ENCODE measurements at regions of chr16 and their contacts with region 1.

Region 1: GRCh38 chr16:3129137-3130131 is 5.4 kb upstream of the ZNF213 start:
- DNase-seq: peak; percentile 73
- H3K4me3 ChIP-seq: peak overlapping the region; percentile 32 to 46 (median 42)
- H3K27ac ChIP-seq: peak overlapping the region; percentile 19
- H3K4me1 ChIP-seq: peaks cover 22% of the 10 kb centered on the region
- H3K27me3 ChIP-seq: no peaks in the 10 kb centered on the region
- CTCF ChIP-seq: peak; percentile 87 to 91

Region 2: DNA sequence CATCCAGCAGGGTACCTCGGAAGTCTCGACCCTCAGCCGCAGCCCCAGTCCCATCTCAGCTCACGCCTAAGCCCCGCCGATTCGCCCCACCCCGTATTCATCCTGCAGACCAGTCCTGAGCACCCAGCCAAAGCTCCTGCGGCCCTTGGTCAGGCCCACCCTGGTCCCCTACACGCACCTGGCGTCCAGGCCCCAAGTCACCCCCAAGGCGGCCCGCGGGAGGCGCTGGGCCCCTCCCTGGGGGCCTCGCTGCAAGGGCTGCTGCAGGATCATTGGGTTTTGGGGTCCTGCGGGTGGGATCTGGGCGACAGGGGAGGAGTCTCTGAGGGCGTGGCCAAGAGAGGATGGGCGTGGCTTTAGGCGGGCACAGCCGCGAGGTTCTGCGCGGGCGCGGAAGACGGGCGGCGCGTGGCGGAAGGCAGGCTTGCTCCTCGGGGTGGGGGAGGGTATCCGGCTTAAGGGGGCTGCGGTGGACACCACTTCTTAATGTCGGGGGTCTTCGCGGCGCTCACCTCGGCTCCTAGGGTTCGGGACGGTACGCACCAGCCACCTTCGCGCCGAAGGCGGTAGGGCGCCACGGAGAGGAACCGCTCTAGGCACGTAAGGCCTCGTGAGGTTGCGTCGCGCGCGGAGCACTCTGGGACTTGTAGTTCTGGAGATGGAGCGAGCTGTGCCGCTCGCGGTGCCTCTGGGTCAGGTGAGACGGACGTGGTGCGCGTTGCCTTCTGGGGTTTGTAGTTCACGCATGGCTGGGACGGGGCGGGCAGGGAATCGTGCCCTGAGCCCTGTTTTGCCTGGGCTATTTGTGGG is 105.6 kb before region 1 on chr16 and contains the starts of genes HCFC1R1 and THOC6:
- CTCF ChIA-PET with region 1: no interaction called
- dilution Hi-C with region 1: loop called (anchors 5 kb)
- in situ Hi-C with region 1: no loop called
- intact Hi-C with region 1: no loop called
- DNase-seq: peak; percentile 98
- H3K4me3 ChIP-seq: peak within 1 kb of the TSS; percentile 60 to 97 (median 90)
- H3K27ac ChIP-seq: peak within 1 kb of the TSS; percentile 97
- H3K4me1 ChIP-seq: peaks cover 26% of the 10 kb centered on the region
- H3K27me3 ChIP-seq: no peaks in the 10 kb centered on the region
- CTCF ChIP-seq: no peak
- total RNA-seq, gene HCFC1R1: 2.2 to 20.4 TPM
- total RNA-seq, gene THOC6: 8.3 to 26.8 TPM

Region 3: GRCh38 chr16:3059000-3059722 is 70.3 kb before region 1 on chr16:
- CTCF ChIA-PET with region 1: interaction called, 5 read pairs
- dilution Hi-C with region 1: no loop called
- in situ Hi-C with region 1: loop called in 1 of 2 experiments (anchors 5 kb)
- intact Hi-C with region 1: loop called (anchors 1 kb)
- DNase-seq: peak; percentile 78
- H3K4me3 ChIP-seq: peak overlapping the region; percentile 74 to 99 (median 82)
- H3K27ac ChIP-seq: peak overlapping the region; percentile 29
- H3K4me1 ChIP-seq: peaks cover 13% of the 10 kb centered on the region
- H3K27me3 ChIP-seq: no peaks in the 10 kb centered on the region
- CTCF ChIP-seq: peak; percentile 48 to 71

Region 4: DNA sequence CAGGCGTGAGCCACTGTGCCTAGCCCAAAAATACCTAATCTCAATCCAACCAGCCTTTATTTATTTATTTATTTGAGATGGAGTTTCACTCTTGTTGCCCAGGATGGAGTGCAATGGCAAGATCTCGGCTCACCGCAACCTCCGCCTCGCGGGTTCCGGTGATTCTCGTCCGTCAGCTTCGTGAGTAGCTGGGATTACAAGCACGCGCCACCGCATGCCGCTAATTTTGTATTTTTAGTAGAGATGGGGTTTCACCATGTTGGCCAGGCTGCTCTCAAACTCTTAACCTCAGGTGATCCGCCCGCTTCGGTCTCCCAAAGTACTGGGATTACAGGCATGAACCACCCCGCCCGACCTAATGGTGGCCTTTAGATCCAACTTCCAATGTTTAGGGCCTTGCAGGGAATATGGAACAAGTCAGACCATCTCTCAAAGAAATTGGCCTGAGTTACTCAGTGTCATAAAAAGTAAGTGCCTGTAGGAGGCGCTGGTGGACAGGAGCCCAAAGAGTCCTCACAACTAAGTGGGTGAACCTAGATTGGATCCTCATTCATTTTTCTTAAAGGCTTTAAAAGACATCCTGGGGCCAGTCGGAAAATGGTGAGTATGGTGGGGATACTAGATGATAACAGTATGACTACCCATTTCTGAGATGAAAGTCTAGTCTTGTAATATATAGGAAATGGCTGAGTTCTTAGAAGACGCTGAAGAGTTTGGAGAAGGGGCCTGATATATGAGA is 35.0 kb before region 1 on chr16:
- CTCF ChIA-PET with region 1: no interaction called
- dilution Hi-C with region 1: no loop called
- in situ Hi-C with region 1: no loop called
- intact Hi-C with region 1: loop called (anchors 1 kb)
- DNase-seq: peak; percentile 37
- H3K4me3 ChIP-seq: no peak overlapping the region
- H3K27ac ChIP-seq: no peak overlapping the region
- H3K4me1 ChIP-seq: no peaks in the 10 kb centered on the region
- H3K27me3 ChIP-seq: no peaks in the 10 kb centered on the region
- CTCF ChIP-seq: peak; percentile 68 to 75

Region 5: GRCh38 chr16:3165111-3165822 is 35.8 kb after region 1 on chr16:
- CTCF ChIA-PET with region 1: no interaction called
- dilution Hi-C with region 1: no loop called
- in situ Hi-C with region 1: no loop called
- intact Hi-C with region 1: loop called (anchors 1 kb)
- DNase-seq: no peak
- H3K4me3 ChIP-seq: no peak overlapping the region
- H3K27ac ChIP-seq: no peak overlapping the region
- H3K4me1 ChIP-seq: no peaks in the 10 kb centered on the region
- H3K27me3 ChIP-seq: peaks cover under 1% of the 10 kb centered on the region
- CTCF ChIP-seq: no peak

Region 6: GRCh38 chr16:3242709-3243108 is 113.3 kb after region 1 on chr16:
- CTCF ChIA-PET with region 1: no interaction called
- dilution Hi-C with region 1: no loop called
- in situ Hi-C with region 1: no loop called
- intact Hi-C with region 1: no loop called
- DNase-seq: no peak
- H3K4me3 ChIP-seq: no peak overlapping the region
- H3K27ac ChIP-seq: no peak overlapping the region
- H3K4me1 ChIP-seq: no peaks in the 10 kb centered on the region
- H3K27me3 ChIP-seq: no peaks in the 10 kb centered on the region
- CTCF ChIP-seq: no peak

Measured in mammary epithelial cell (primary cell).